Right ventricle myocardium inferior (tissue), 1 donor: ENCODE measurements at regions of chr20 and their contacts with region 1.

Region 1: GRCh38 chr20:48295445-48295963 is 510.2 kb upstream of the SULF2 start:
- DNase-seq: no peak
- ATAC-seq: no peak

Region 2: DNA sequence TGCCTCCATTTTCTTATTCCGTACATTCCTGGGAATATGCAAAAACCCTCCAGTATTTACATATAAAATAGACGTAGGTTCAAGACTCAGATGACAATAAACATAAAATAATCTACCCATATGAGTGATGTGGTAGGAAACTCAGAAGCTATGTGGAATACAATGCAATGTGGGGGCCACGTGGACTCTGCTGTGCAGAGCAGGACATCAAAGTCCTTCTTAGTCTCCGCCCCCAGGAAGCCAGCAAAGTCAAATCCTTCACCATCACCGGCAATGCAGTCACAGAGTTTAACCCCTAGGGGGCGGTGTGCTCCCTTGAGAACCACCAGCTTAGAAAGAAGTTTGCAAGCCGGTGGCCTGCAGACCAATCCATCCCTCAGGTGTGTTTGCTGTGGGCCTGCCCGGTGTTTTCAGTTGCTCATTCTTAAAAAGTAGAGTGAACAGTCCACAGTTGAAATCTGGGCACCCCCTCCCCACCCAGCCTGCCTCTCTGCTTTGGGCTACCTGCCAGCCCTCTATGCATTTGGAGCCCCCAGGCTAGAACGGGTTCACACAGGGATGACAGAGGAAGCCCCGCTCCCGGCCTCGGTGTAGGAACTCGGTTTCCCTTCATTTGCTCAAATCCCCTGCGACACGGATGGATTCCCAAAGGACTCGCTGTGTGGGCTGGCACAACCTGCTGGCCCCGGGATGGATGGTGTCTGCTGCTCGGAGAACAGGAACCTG is 570.1 kb before region 1 on chr20:
- intact Hi-C with region 1: loop called (anchors 10 kb)
- DNase-seq: peak; percentile 74
- ATAC-seq: peak; percentile 27